ENCODE measurements at regions of chr5 and their contacts with region 1.

Region 1: GRCh38 chr5:138743506-138743905 is 9.7 kb upstream of the CTNNA1 start:
- DNase-seq: no peak
- H3K4me3 ChIP-seq: no peak overlapping the region
- H3K27ac ChIP-seq: no peak overlapping the region
- H3K4me1 ChIP-seq: peaks cover 6% of the 10 kb centered on the region
- H3K27me3 ChIP-seq: no peaks in the 10 kb centered on the region
- CTCF ChIP-seq: no peak

Region 2: DNA sequence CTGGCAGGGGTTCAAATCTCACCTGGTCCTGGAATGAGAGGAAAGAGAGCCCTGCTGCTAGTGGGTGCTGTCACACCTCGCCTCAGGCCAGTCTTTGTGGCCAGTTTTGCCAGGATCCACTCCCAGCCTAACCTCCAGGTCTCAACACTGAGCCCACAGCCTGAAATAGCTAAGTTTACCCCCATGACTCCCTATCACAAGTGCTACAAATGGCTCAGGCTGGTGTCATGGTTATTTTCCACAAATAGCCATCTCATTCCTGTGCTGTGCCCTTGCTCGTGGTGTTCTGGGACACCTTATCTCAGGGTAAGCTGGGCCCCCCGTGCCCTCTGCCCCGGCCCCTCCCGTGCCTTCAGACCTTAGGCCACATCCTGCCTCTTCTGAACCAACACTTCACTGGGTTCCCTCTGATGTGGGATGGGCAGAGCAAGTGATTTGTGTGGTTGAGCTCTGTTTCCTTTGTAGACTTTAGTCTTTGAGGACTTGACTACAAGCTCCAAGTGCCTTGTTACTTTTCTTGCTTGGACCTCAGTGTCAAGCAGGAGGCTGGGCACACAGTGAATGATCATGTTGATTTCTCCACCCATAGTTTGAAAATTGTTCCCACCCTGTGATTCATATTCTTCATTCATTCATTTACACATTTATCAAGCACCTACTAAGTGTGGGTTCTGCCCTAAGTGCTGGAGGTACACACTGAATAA is 75.0 kb before region 1 on chr5:
- CTCF ChIA-PET with region 1: interaction called, 20 read pairs
- dilution Hi-C with region 1: no loop called
- in situ Hi-C with region 1: no loop called
- intact Hi-C with region 1: no loop called
- DNase-seq: no peak
- H3K4me3 ChIP-seq: no peak overlapping the region
- H3K27ac ChIP-seq: no peak overlapping the region
- H3K4me1 ChIP-seq: peaks cover 13% of the 10 kb centered on the region
- H3K27me3 ChIP-seq: no peaks in the 10 kb centered on the region
- CTCF ChIP-seq: no peak

Measured in mammary epithelial cell (primary cell).